Left ventricle myocardium superior (tissue), 1 donor: ENCODE measurements at regions of chr13 and their contacts with region 1.

Region 1: GRCh38 chr13:28958018-28958417 is 137.9 kb downstream of the MTUS2 start:
- DNase-seq: peak; percentile 35
- ATAC-seq: peak; percentile 16

Region 2: DNA sequence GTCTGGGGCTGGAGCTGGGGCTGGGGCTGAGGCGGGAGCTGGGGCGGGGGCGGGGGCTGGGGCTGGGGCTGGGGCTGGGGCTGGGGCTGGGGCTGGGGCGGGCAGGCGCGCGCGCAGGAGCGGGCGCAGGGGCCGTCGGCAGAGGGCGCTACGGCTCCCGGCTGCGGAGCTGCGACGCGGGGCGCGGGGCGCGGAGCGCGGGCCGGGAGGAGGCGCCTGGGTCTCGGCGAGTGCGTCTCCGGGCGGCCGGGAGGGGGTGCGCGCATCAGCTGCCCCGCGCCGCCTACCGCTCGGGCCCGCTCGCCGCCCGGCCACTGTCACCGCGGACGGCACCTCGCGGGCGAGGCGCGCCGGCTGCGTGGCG is 138.3 kb before region 1 on chr13:
- intact Hi-C with region 1: loop called (anchors 5 kb)
- DNase-seq: peak; percentile 85
- ATAC-seq: peak; percentile 96